HEK293 (cell line): ENCODE measurements at regions of chr3 and their contacts with region 1.

Region 1: DNA sequence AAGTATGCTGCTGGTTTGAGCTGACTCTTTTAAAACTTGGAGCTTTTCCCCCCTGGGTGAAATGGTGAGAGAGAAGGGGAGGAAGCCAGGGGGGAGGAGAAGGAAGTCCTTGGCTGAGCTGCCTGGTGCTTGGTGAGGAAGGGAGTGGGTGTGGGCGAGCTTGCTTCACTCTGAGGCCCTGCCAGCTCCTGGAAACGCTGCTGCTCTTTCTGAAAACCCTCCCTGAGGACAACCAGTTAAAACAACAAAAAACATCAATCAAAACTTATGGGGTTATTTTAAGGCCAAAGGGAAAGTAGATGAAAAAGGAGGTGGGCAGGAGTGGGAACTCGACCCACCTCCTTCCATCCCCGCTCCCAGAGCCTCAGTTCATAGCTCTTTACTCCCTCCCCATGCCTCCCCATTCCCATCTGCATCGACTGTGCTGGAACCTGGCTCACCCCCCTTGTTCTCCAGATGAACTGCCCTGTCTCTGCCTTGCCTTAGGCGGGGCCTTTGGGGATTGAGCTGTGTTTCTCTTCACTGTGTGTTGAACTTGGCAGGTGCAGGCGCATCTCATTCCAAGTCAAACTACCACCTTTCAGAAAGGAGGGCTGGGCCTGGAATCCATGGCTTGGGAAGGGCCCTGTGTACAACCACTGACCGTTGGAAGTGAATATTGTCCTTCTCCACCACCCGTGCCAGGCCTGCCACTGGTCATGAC is 166.1 kb downstream of the ZNF621 start:
- H3K4me3 ChIP-seq: no peak overlapping the region
- H3K27ac ChIP-seq: no peak overlapping the region
- H3K4me1 ChIP-seq: no peaks in the 10 kb centered on the region
- CTCF ChIP-seq: no peak

Region 2: GRCh38 chr3:40387001-40387894 is 303.7 kb before region 1 on chr3 and contains the start of gene ENTPD3:
- CTCF ChIA-PET with region 1: no interaction called
- POLR2A ChIA-PET with region 1: interaction called, 10 read pairs
- H3K4me3 ChIP-seq: peak within 1 kb of the TSS; percentile 6; the same call in 1 of the 2 replicates
- H3K27ac ChIP-seq: no peak within 1 kb of the TSS
- H3K4me1 ChIP-seq: no peaks in the 10 kb centered on the region
- CTCF ChIP-seq: no peak

Region 3: DNA sequence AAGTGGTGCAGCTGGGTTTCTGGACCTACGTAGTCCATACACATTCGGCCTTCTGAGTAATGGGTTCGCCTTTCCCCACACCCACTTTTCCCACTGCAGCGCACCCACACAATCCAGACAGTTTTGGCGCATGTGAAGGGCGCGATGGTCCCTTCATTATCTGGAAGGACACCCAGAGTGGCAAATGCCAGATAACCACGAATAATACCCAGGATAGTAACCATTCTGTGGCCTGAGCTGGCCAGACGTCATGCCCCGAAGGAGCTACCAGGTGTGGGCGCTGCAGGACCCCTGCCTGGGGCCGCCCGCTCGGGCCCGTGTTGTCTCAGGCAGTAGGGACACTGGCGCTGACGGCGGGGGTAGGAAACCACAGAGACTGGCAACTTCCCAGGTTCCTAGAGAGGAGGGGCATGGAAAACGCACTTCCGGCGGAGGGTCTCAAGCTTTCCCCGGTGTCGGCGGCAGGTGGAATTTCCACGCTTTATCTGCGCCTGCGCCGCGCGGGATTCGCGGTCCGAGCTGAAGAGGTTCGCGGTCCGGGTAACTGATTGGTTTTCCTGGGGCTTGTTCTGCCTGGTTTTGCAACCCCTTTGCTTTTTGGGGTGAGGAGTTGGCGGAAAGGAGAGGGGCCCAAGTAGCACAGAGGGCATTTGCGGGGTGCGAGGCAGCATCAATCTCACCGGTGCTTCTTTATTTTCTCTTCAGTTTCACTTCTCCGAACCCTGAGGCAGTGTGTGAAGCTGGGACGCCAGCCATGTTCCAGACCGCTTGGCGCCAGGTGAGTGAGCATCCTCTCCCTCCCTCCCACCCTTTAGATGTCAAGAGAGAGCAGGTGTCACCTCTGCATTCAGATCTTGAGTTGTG is 185.1 kb before region 1 on chr3 and contains the start of gene ZNF620:
- CTCF ChIA-PET with region 1: no interaction called
- POLR2A ChIA-PET with region 1: no interaction called
- H3K4me3 ChIP-seq: peak within 1 kb of the TSS; percentile 87
- H3K27ac ChIP-seq: peak within 1 kb of the TSS; percentile 77
- H3K4me1 ChIP-seq: no peaks in the 10 kb centered on the region
- CTCF ChIP-seq: peak; percentile 65

Region 4: GRCh38 chr3:41075975-41076374 is 385.1 kb after region 1 on chr3:
- CTCF ChIA-PET with region 1: no interaction called
- POLR2A ChIA-PET with region 1: no interaction called
- H3K4me3 ChIP-seq: no peak overlapping the region
- H3K27ac ChIP-seq: no peak overlapping the region
- H3K4me1 ChIP-seq: no peaks in the 10 kb centered on the region
- CTCF ChIP-seq: no peak